ENCODE measurements at regions of chr1 and their contacts with region 1.

Region 1: DNA sequence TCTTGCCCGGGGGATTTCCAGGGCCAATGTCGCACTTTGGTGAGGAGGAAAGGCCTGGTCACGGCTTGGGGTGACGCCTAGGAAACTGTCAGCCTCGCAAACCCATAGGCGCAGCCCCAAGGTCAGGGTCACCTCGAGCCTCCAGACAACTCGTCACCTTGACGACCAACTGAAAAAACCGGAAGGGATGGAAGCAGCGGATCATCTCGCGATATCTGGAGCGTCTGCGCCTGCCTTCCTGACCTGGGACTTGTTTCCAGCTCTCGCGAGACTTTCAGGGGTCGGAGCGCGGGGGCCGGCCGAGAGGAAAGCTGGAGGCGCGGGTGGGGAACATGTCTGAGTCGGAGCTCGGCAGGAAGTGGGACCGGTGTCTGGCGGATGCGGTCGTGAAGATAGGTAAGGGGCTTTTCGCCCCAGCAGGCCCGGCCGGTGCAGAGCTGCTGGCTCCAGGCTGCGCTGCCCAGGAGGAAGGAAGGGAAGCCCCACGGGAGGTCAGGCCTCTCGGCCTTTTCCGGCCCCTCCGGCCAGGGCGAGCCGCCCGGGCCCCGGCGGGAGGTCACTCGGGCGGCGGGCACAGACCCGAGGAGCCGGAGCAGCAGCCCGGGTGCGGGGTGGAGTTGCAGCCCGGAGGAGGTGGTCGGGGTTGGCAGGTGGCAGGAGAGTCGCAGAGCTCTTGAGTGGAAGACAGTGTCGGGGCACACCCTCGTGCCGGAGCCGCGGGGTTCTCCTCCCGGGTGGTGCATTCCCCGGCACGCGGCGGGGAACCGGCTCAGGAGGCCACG is 47.2 kb upstream of the NBL1 start:
- DNase-seq: peak; percentile 95
- CTCF ChIP-seq: no peak

Region 2: DNA sequence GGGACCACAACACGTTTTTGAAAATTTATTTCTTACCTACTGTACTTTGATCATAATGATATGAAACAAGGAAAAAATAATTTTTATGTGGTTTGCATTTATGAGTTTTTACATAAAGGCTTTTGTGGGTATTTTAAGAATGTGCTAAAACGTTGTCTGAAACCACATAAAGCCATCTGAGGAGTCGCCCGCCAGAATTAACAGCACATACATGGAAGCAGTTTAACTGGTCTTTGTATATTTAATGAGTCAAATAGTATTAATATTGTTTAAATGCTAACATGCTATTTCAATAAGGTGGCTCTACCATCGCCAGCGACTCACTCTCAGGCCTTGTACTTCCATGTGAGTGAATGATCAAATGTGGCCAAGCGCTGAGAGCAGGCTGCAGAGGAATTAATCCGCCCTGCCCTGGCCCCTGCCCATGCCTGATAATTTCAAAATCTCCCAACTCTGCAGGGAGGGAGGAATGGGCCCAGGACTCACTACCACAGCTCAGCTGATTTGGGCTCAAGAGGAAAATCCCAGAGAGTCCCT is 235.2 kb before region 1 on chr1:
- in situ Hi-C with region 1: no loop called
- DNase-seq: no peak
- CTCF ChIP-seq: no peak

Region 3: DNA sequence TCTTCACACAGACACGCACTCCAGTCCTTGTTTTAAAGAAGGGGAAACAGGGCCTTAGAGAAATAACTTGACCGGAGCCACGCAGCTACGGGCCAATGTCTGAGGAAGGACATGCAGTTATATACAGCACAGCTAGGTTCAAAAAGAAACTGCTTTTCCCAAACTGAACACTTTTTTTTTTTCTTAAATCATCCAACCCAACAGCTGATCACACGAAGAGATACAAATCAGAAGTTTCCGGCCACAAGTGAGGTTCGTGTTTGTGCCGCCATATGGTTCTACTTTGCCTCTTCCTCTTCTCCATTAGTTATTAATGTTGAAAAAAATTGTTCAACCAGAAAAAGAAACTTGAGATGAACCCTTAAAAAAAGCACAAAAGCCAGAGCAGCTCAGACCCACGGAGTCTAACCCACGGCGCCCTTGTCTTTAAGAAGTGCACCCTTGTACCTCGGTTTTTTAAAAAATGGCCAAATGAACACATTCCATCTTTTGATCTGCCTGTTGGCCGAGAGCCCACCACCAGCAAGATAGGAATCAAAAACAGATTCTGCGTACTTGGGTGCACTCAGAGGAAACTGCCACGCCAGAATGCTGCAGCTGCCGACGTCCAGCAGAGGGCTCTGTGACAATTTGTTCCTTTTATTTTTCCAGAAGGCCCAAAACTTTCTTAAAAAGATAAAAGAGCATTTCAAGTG is 205.9 kb before region 1 on chr1:
- in situ Hi-C with region 1: loop called (anchors 25 kb)
- DNase-seq: peak; percentile 79
- CTCF ChIP-seq: peak; percentile 81

Region 4: GRCh38 chr1:19825298-19825697 is 228.4 kb after region 1 on chr1:
- in situ Hi-C with region 1: no loop called
- DNase-seq: no peak
- CTCF ChIP-seq: no peak

Measured in GM13976 (cell line).